CD4-positive, alpha-beta memory T cell (primary cell): ENCODE measurements at regions of chr2 and their contacts with region 1.

Region 1: DNA sequence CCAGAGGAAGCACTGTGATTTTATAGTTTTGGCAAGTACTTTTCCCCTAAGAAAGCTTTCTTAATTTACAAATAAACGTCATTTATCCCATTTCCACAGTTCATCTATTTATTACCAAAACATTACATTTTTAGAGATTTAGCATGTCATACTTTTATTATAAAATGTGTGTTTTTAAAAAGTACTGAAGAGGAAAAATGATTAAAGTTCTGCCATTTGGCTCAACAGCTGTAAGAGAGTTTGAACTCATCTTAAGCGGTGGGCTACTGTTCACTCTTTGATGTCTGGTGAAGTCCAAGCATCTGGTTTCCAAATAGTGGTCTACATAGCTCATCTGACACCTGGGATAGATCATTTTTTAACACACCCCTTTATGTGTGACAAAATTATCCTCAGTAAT is 51.3 kb upstream of the TANC1 start:
- DNase-seq: no peak
- H3K4me3 ChIP-seq: no peak overlapping the region
- H3K4me3 Mint-ChIP-seq: no peak overlapping the region
- H3K27ac ChIP-seq: no peak overlapping the region
- H3K27ac Mint-ChIP-seq: no peak overlapping the region
- H3K4me1 ChIP-seq: no peaks in the 10 kb centered on the region
- H3K4me1 Mint-ChIP-seq: no peaks in the 10 kb centered on the region
- H3K27me3 ChIP-seq: no peaks in the 10 kb centered on the region
- H3K27me3 Mint-ChIP-seq: peaks cover 0 to 5% of the 10 kb centered on the region in 2 donors

Region 2: DNA sequence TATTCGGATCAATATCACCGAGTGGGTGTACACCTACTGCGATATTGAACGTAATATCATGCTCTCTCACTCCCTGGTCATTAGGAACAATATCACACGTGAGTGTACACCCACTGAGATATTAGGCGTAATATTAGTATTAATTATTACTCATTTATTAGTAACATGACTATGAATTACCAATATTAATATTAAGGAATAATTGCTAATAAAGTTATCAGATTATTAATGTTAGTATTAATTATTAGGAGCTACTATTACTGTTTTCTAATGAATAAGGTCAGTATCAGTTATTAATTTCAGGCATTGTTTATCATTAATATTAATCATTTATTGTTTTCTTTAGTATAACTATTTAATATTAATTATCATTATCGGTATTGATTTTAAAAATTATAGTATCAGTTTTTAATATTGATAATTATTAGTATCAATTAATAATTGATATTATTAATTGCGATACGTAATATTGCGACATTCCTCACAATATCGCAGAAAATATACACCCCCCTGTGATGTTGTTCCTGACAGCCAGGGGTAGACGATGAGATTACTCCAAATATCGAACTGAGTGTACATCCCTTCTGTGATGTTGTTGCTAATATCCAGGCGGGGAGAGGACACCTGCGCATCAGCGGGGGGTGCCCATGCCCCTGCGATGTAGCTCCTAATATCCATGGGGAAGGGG is 37.7 kb before region 1 on chr2:
- CTCF ChIA-PET with region 1: no interaction called
- POLR2A ChIA-PET with region 1: no interaction called
- intact Hi-C with region 1: loop called (anchors 2 kb)
- DNase-seq: no peak
- H3K4me3 ChIP-seq: no peak overlapping the region
- H3K4me3 Mint-ChIP-seq: no peak overlapping the region
- H3K27ac ChIP-seq: no peak overlapping the region
- H3K27ac Mint-ChIP-seq: no peak overlapping the region
- H3K4me1 ChIP-seq: no peaks in the 10 kb centered on the region
- H3K4me1 Mint-ChIP-seq: no peaks in the 10 kb centered on the region
- H3K27me3 ChIP-seq: no peaks in the 10 kb centered on the region
- H3K27me3 Mint-ChIP-seq: peaks cover 0 to 4% of the 10 kb centered on the region in 2 donors

Region 3: DNA sequence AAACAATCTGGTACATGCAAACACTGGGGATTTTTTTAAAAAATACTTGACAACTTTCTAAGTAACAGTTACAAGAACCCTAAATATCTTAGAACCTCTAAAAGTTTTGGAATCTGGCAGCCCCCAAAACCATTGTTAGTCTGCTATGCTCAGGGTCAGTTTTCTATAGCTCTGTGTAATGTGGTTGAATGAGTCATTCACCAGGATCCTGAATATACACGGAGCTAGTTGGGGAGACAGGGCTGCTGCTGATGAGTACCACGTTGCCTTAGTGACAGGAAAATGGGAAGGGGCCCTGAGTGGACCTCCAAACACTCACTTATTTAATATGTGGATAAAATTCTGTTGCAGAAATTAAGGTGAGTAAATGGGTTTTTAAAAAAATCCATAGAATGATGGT is 14.5 kb after region 1 on chr2:
- CTCF ChIA-PET with region 1: no interaction called
- POLR2A ChIA-PET with region 1: no interaction called
- intact Hi-C with region 1: no loop called
- DNase-seq: no peak
- H3K4me3 ChIP-seq: no peak overlapping the region
- H3K4me3 Mint-ChIP-seq: no peak overlapping the region
- H3K27ac ChIP-seq: no peak overlapping the region
- H3K27ac Mint-ChIP-seq: no peak overlapping the region
- H3K4me1 ChIP-seq: no peaks in the 10 kb centered on the region
- H3K4me1 Mint-ChIP-seq: no peaks in the 10 kb centered on the region
- H3K27me3 ChIP-seq: no peaks in the 10 kb centered on the region
- H3K27me3 Mint-ChIP-seq: peaks cover 0 to 2% of the 10 kb centered on the region in 2 donors

Region 4: GRCh38 chr2:159094173-159094737 is 177.1 kb after region 1 on chr2:
- CTCF ChIA-PET with region 1: no interaction called
- POLR2A ChIA-PET with region 1: no interaction called
- intact Hi-C with region 1: no loop called
- DNase-seq: no peak
- H3K4me3 ChIP-seq: no peak overlapping the region
- H3K4me3 Mint-ChIP-seq: peak overlapping the region in 2 of 8 donors; percentile 5 to 22
- H3K27ac ChIP-seq: no peak overlapping the region
- H3K27ac Mint-ChIP-seq: peak overlapping the region in 4 of 7 donors; percentile 41 to 85 (median 67)
- H3K4me1 ChIP-seq: peaks cover 46% of the 10 kb centered on the region
- H3K4me1 Mint-ChIP-seq: peaks cover 23 to 53% (median 36%) of the 10 kb centered on the region in 4 donors
- H3K27me3 ChIP-seq: no peaks in the 10 kb centered on the region
- H3K27me3 Mint-ChIP-seq: no peaks in the 10 kb centered on the region